Mucosa of descending colon (tissue), 3 donors: ENCODE measurements at regions of chr7 and their contacts with region 1.

Region 1: DNA sequence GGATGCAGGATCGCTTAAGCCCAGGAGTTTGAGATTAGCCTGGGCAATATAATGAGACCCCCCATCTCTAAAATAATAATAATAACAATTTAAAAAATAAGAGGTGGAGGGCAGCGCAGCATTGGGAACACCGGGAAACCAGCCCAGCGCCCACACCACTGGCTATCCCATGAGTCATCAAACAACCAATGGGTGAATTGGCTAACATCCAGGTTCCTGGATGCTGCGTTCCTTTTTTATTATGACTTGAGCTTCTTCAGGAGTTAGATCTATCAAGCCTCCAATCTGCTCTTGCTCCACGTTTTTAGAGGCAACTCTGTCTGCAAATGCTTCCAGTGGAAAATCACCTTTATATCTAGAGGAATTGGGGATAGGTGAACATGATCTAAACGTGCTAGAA is 10.0 kb upstream of the LRRC4 start:
- DNase-seq: peak in 1 of 3 donors; percentile 26
- ATAC-seq: peak; percentile 48
- H3K4me3 ChIP-seq: no peak overlapping the region
- H3K4me1 ChIP-seq: no peaks in the 10 kb centered on the region
- CTCF ChIP-seq: no peak

Region 2: DNA sequence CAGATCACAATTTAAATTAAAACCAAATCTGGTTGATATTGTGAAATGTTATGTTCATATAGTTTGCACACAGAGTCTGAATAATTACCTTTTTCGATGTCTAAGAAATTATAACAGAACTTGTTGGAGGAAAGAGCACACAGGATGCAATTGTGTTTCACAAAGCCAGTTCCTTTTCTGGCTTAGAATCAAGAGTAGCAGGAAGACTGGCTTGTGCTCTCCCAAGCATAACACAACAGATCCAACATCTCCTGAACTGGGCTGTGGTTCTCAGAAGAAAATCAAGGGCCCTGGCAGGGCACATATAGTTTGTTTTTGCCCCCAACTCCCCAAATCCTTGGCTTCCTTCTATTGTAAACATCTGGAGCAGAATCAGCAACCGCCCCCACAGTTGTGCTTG is 72.7 kb before region 1 on chr7:
- intact Hi-C with region 1: no loop called
- DNase-seq: no peak
- ATAC-seq: no peak
- H3K4me3 ChIP-seq: no peak overlapping the region
- H3K4me1 ChIP-seq: no peaks in the 10 kb centered on the region
- CTCF ChIP-seq: no peak

Region 3: DNA sequence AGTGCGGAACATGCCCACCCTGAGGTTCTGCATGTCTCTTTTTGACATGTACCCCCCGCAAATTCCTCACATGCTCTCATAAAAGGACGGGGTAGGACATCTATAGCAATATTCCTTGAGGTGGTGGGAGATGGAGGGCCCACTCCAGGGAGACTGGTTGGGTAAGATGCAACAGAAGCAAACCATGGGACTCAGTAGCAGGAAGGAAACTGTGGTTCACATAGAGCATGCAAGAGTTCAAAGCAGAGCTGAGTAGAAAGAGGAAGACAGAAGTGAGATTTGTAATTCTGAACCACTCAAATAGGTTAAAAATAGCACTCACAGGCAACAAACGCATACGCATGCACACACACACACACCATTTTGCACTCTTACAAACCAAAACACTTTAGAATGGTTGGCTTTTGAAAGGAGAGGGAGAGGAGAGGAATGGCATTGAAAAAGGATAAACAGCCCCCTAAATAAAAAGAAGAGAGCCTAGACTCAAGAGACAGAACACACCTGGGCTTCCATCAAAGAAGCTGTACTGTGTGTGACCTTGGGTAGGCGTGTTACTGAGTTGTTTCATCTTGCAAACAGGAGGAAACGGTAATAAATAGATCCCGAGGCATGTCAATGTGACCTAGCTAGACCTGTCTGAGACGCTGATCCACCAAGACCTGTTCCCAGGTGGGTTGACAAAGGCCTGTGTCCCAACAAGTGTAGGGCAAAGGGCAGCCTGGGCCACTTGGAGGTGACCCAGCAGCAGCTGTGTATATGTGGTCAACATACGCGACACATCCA is 67.6 kb after region 1 on chr7:
- intact Hi-C with region 1: loop called in 1 of 2 experiments (anchors 5 kb)
- DNase-seq: peak in 1 of 3 donors; percentile 16
- ATAC-seq: peak; percentile 72
- H3K4me3 ChIP-seq: no peak overlapping the region
- H3K4me1 ChIP-seq: peaks cover 4% of the 10 kb centered on the region
- CTCF ChIP-seq: no peak